ENCODE measurements at regions of chr20 and their contacts with region 1.

Region 1: DNA sequence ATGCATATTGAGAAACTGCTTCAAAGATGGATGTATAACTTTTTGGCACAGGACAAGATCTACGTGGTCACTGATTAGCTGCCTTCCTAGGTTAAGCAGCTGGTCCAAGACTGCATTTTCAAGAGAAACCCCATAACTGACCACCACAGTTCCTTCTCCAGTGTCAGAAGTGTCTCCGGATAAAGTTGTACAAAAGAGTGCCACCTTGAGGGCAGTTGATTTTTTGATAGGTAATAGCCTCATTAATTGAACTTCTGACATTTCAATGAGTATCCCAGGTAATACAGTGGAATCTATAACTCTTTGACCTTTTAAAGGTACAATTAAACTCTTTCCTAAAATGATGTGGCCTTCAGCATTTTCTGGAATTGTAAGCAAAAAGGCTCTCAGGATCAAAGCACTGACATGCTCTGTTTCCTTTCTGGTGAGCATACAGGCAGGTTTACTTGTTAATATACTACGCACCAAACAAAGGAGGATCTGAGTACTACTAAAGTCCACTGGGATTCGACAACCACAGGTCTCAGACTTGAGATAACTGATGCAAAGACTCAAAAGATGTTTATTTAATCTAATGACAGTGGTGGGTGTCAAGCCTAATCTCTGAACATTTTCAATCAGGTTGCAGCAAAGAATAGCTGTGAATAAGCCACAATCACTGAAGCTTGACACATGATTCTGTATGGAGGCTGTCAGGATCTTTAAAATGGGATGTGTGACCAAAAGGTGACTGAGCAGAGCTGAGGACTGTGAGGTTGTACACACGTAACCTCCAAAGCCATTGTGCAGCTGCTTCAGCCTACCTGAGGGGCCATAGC is 21.2 kb downstream of the MKKS start:
- DNase-seq: no peak
- H3K4me3 ChIP-seq: no peak overlapping the region
- H3K27ac ChIP-seq: no peak overlapping the region
- H3K4me1 ChIP-seq: peaks cover 25% of the 10 kb centered on the region
- H3K27me3 ChIP-seq: no peaks in the 10 kb centered on the region
- CTCF ChIP-seq: peak; percentile 14 to 22

Region 2: DNA sequence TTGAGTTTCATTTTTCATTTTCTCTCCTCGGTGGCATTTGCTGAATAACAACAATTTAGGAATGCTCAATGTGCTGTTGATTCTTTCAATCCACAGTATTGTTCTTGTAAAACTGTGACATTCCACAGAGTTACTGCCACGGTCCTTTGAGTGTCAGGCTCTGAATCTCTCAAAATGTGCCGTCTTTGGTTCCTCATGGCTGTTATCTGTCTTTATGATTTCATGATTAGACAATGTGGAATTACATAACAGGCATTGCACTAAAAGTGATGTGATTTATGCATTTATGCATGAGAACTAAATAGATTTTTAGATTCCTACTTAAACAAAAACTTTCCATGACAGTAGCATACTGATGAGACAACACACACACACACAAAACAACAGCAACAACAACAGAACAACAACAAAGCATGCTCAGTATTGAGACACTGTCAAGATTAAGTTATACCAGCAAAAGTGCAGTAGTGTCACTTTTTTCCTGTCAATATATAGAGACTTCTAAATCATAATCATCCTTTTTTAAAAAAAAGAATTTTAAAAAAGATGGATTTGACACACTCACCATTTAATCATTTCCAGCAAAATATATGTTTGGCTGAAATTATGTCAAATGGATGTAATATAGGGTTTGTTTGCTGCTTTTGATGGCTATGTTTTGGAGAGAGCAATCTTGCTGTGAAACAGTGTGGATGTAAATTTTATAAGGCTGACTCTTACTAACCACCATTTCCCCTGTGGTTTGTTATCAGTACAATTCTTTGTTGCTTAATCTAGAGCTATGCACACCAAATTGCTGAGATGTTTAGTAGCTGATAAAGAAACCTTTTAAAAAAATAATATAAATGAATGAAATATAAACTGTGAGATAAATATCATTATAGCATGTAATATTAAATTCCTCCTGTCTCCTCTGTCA is 106.1 kb before region 1 on chr20:
- CTCF ChIA-PET with region 1: no interaction called
- dilution Hi-C with region 1: no loop called
- in situ Hi-C with region 1: no loop called
- intact Hi-C with region 1: loop called (anchors 10 kb)
- DNase-seq: peak; percentile 60
- H3K4me3 ChIP-seq: no peak overlapping the region
- H3K27ac ChIP-seq: no peak overlapping the region
- H3K4me1 ChIP-seq: peaks cover 51% of the 10 kb centered on the region
- H3K27me3 ChIP-seq: no peaks in the 10 kb centered on the region
- CTCF ChIP-seq: no peak

Measured in mammary epithelial cell (primary cell).